ENCODE measurements at regions of chr17 and their contacts with region 1.

Region 1: GRCh38 chr17:80219013-80219762 is 945 bp downstream of the SGSH start:
- DNase-seq: peak; percentile 94
- ATAC-seq: peak; percentile 84
- H3K4me3 ChIP-seq: peak overlapping the region; percentile 59 to 86 (median 67)
- H3K4me3 Mint-ChIP-seq: peak overlapping the region; percentile 96
- H3K27ac ChIP-seq: peak overlapping the region; percentile 90 to 96
- H3K27ac Mint-ChIP-seq: peak overlapping the region; percentile 94
- H3K4me1 ChIP-seq: peaks cover 10 to 30% of the 10 kb centered on the region in 2 donors
- H3K4me1 Mint-ChIP-seq: peaks cover 22% of the 10 kb centered on the region
- H3K27me3 ChIP-seq: no peaks in the 10 kb centered on the region
- H3K27me3 Mint-ChIP-seq: no peaks in the 10 kb centered on the region
- CTCF ChIP-seq: no peak

Region 2: DNA sequence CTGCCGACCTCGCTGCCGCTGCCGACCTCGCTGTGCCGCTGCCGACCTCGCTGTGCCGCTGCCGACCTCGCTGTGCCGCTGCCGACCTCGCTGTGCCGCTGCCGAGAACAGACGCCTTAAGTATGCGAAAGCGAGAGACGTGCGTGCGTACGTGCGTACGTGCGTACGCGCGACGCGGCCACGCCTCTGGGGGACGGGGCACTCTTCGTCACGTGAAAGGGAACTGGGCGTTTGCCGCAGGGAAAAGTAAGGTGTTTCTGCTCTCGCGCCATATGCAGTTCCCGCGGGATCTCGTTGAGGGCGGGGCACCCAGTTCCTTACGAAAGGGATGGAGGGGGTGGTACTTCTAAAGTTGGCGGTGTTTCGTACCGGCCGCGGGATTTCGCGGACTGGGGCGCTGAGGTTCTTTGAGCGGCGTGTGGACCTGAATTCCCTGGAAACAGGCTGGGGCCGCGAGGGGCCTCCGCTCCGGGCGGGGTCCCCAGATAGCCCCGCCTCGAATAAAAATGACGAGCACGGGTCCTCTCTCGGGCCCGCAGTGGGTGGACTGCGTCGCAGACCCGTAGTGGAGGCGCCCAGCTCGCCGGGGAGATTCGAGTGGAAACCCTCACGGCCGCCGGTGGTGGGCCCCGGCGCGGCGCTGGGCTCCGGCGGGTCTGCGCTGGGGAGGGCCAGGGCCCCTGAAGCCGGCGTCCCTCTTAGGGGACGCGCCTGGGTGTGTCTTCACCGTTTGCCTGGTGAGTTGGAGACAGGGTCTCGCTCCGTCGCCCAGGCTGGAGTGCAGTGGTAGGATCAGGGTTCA is 72.0 kb before region 1 on chr17 and contains the start of gene EIF4A3:
- CTCF ChIA-PET with region 1: no interaction called
- POLR2A ChIA-PET with region 1: no interaction called
- intact Hi-C with region 1: loop called (anchors 1 kb)
- DNase-seq: peak; percentile 99
- ATAC-seq: peak; percentile 90
- H3K4me3 ChIP-seq: peak within 1 kb of the TSS; percentile 61 to 94 (median 79)
- H3K4me3 Mint-ChIP-seq: peak within 1 kb of the TSS; percentile 95
- H3K27ac ChIP-seq: peak within 1 kb of the TSS; percentile 82 to 87
- H3K27ac Mint-ChIP-seq: peak within 1 kb of the TSS; percentile 97
- H3K4me1 ChIP-seq: peaks cover 25 to 37% of the 10 kb centered on the region in 2 donors
- H3K4me1 Mint-ChIP-seq: peaks cover 36% of the 10 kb centered on the region
- H3K27me3 ChIP-seq: no peaks in the 10 kb centered on the region
- H3K27me3 Mint-ChIP-seq: no peaks in the 10 kb centered on the region
- CTCF ChIP-seq: no peak
- total RNA-seq, gene EIF4A3: 83.4 and 86.0 TPM in 2 replicates

Region 3: DNA sequence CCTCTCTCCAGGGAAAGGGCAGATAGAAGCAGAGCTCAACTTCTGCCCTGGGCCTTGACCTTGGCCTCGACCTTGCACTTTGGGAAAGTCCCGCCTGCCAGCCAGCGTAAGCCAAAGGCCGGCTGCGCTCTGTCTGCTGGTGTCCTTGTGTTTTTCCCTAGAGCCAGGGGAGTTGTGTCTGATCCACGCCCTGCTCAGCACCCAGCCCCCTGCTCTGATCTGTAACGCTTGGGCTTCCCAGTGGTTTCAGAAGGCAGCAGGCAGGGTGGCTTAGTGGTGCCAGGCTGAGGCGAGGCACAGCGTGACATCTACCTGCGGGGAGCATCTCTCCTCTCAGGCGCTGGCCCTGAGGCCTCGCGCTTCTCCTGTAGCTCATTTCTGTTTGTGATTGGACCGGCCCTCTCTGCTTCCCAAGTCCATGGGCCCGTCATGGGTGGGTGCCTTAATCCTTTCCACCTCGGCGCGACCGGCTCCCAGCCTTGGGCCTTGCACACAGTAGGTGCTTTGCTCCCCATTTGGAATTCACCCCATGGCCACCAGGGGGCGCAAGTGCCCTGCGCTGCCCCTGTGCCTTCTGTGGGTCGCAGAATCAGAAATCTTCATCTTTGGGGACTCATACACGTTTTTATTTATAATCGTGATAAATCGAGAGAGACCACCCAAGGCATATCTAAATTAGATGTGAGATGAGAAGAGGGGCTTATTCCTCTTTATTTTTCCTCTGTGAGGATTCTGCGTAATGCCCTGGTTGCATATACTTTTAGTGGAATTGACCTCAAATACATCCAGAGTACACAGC is 23.3 kb before region 1 on chr17:
- CTCF ChIA-PET with region 1: interaction called, 6 read pairs
- POLR2A ChIA-PET with region 1: interaction called, 18 read pairs
- intact Hi-C with region 1: no loop called
- DNase-seq: peak; percentile 74
- ATAC-seq: peak; percentile 24
- H3K4me3 ChIP-seq: no peak overlapping the region
- H3K4me3 Mint-ChIP-seq: no peak overlapping the region
- H3K27ac ChIP-seq: no peak overlapping the region
- H3K27ac Mint-ChIP-seq: no peak overlapping the region
- H3K4me1 ChIP-seq: no peaks in the 10 kb centered on the region
- H3K4me1 Mint-ChIP-seq: no peaks in the 10 kb centered on the region
- H3K27me3 ChIP-seq: peaks cover 0 to 11% (median 0%) of the 10 kb centered on the region in 4 experiments
- H3K27me3 Mint-ChIP-seq: peaks cover 16% of the 10 kb centered on the region
- CTCF ChIP-seq: peak; percentile 99

Region 4: DNA sequence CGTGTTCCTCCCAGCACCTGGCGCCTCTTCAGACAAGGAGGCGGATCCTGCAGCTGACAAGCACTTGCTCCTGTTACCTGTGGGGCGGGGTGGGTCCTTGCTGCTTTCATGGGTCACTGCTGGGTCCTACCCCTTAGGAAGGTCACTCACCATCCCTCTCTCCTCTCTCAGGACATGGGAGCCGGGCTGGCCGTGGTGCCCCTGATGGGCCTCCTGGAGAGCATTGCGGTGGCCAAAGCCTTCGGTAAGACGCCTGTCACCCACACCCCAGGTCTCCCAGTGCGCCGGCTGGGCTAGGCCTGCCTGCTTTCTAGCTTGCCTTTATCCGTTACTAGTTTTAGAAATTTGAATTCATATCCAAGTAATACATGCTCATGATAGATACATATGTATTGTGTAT is 18.2 kb after region 1 on chr17:
- CTCF ChIA-PET with region 1: no interaction called
- POLR2A ChIA-PET with region 1: interaction called, 10 read pairs
- intact Hi-C with region 1: no loop called
- DNase-seq: no peak
- ATAC-seq: no peak
- H3K4me3 ChIP-seq: no peak overlapping the region
- H3K4me3 Mint-ChIP-seq: no peak overlapping the region
- H3K27ac ChIP-seq: no peak overlapping the region
- H3K27ac Mint-ChIP-seq: no peak overlapping the region
- H3K4me1 ChIP-seq: no peaks in the 10 kb centered on the region
- H3K4me1 Mint-ChIP-seq: no peaks in the 10 kb centered on the region
- H3K27me3 ChIP-seq: no peaks in the 10 kb centered on the region
- H3K27me3 Mint-ChIP-seq: no peaks in the 10 kb centered on the region
- CTCF ChIP-seq: no peak

Region 5: GRCh38 chr17:80263253-80264204 is 44.3 kb after region 1 on chr17:
- CTCF ChIA-PET with region 1: interaction called, 3 read pairs
- POLR2A ChIA-PET with region 1: no interaction called
- intact Hi-C with region 1: loop called (anchors 1 kb)
- DNase-seq: peak; percentile 92
- ATAC-seq: peak; percentile 62
- H3K4me3 ChIP-seq: peak overlapping the region; percentile 46 to 99 (median 86)
- H3K4me3 Mint-ChIP-seq: peak overlapping the region; percentile 97
- H3K27ac ChIP-seq: peak overlapping the region; percentile 86 to 90
- H3K27ac Mint-ChIP-seq: peak overlapping the region; percentile 95
- H3K4me1 ChIP-seq: peaks cover 35 to 57% of the 10 kb centered on the region in 2 donors
- H3K4me1 Mint-ChIP-seq: peaks cover 57% of the 10 kb centered on the region
- H3K27me3 ChIP-seq: no peaks in the 10 kb centered on the region
- H3K27me3 Mint-ChIP-seq: no peaks in the 10 kb centered on the region
- CTCF ChIP-seq: peak; percentile 37

Region 6: GRCh38 chr17:80294210-80294609 is 75.0 kb after region 1 on chr17:
- CTCF ChIA-PET with region 1: no interaction called
- POLR2A ChIA-PET with region 1: no interaction called
- intact Hi-C with region 1: no loop called
- DNase-seq: no peak
- ATAC-seq: no peak
- H3K4me3 ChIP-seq: no peak overlapping the region
- H3K4me3 Mint-ChIP-seq: no peak overlapping the region
- H3K27ac ChIP-seq: no peak overlapping the region
- H3K27ac Mint-ChIP-seq: no peak overlapping the region
- H3K4me1 ChIP-seq: no peaks in the 10 kb centered on the region
- H3K4me1 Mint-ChIP-seq: no peaks in the 10 kb centered on the region
- H3K27me3 ChIP-seq: no peaks in the 10 kb centered on the region
- H3K27me3 Mint-ChIP-seq: no peaks in the 10 kb centered on the region
- CTCF ChIP-seq: no peak